ENCODE measurements at regions of chr19 and their contacts with region 1.

Region 1: GRCh38 chr19:5170329-5170745 is 170.3 kb downstream of the PTPRS start:
- DNase-seq: no peak
- H3K4me3 ChIP-seq: no peak overlapping the region
- H3K27ac ChIP-seq: no peak overlapping the region
- H3K4me1 ChIP-seq: peaks cover 8% of the 10 kb centered on the region
- H3K27me3 ChIP-seq: peaks cover 6 to 9% of the 10 kb centered on the region in 2 experiments
- CTCF ChIP-seq: peak; percentile 57 to 60
- POLR2A ChIP-seq: no peak

Region 2: DNA sequence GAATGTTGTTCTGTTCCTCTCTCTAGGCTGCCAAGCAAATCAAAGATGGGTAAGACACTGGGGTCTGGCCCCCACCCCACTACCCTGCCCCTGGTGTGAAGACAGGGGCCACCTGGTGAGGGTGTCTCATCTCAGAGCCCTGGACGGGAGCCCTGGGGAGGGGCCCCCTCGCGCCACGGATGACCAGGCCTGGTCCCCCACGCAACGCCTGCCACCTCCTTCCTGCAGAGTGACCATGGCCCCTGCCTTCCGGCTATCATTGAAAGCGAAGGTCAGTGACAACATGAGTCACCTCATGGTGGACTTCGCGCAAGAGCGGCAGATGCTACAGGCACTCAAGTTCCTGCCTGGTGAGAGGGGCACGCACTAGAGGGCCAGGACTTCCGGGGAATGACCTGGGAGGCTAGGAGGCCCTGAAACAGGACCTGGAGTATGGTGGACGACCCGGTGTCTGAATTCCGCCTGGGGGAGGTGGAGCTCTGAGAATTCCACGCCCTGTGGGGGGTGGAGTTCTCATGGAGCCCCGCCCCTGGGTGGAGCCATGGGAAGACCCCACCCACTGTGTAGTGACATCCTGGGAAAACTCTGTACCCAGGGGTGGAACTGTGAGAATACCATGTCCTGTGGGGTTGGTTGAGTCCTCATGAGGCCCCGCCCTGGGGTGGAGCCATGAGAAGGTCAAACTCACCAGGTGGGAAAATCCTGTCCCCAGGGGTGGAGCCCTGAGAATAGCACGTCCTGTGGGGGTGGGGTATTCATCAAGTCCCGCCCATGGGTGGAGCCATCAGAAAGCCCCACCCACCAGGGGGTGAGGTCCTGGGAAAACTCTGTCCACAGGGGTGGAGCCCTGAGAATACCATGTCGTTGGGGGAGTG is 859.9 kb before region 1 on chr19:
- CTCF ChIA-PET with region 1: no interaction called
- POLR2A ChIA-PET with region 1: no interaction called
- dilution Hi-C with region 1: no loop called
- intact Hi-C with region 1: loop called (anchors 10 kb)
- DNase-seq: no peak
- H3K4me3 ChIP-seq: no peak overlapping the region
- H3K27ac ChIP-seq: no peak overlapping the region
- H3K4me1 ChIP-seq: no peaks in the 10 kb centered on the region
- H3K27me3 ChIP-seq: no peaks in the 10 kb centered on the region
- CTCF ChIP-seq: no peak
- POLR2A ChIP-seq: no peak

Measured in endothelial cell of umbilical vein (primary cell).